Activated CD4-positive, alpha-beta T cell treated with anti-CD3 and anti-CD28 coated beads, Interleukin-2, amount 10 ng/mL, durations not matched to agents 24 days and 14 days (primary cell): ENCODE measurements at regions of chr1 and their contacts with region 1.

Region 1: DNA sequence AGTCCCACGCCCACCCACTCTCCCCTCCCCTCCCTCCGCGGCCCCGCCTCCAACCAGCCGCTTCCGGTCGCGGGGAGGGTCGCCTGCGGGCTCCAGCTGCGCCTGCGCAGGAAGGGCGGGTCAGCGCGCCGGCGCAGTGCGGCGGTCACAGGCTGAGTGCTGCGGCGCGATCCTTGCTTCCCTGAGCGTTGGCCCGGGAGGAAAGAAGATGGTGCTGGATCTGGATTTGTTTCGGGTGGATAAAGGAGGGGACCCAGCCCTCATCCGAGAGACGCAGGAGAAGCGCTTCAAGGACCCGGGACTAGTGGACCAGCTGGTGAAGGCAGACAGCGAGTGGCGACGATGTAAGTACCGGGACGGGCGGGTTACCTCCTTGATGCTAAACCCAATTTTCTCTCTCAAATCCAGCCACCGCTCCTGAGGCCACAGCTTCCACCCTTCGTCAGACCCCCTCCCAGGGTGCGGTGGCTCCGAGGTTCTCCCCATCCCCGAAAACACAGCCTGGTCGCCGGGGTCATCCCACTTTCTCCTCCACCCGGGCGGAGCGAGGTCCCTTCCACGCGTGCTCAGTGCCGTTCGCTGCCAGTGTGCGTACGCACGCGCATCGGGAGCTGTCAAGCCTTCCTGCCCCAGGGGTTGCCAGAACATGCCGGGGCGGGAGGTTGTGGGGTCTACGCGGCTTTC is at the start of gene SARS1:
- DNase-seq: peak; percentile 97
- H3K4me3 Mint-ChIP-seq: peak within 1 kb of the TSS; percentile 99
- H3K27ac Mint-ChIP-seq: peak within 1 kb of the TSS; percentile 96
- H3K4me1 Mint-ChIP-seq: peaks cover 25% of the 10 kb centered on the region
- H3K27me3 Mint-ChIP-seq: no peaks in the 10 kb centered on the region
- total RNA-seq, gene SARS1: 141 and 150 TPM in 2 replicates

Region 2: DNA sequence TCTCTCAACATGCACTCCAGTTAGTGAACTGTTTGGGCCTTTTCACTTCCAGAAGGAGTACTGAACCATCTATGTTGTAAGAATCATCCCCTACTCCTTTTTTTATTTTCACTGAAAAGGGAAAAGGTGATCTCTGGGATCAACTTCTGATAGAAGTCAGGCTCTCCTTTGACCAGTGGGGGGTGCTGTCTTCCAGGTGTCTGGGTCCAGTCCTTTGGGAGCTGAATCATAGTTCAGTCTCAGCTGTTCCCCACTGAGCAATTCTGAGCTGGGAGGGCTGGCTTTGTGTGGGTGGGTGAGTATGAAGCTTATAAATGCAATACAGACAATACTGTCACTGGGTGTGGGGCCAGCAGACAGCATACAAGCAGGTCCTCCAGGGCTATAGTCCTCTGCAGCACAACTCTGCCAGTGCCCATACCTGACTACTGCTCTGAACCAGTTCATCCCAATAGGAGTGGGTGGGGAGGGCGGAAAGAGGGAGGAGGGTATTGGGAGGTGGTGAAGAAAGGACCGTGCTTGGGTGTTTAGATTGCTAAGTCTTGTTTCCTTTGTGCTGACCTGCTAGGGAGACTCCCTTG is 12.7 kb before region 1 on chr1:
- intact Hi-C with region 1: loop called (anchors 1 kb)
- DNase-seq: peak; percentile 78
- H3K4me3 Mint-ChIP-seq: no peak overlapping the region
- H3K27ac Mint-ChIP-seq: no peak overlapping the region
- H3K4me1 Mint-ChIP-seq: peaks cover 23% of the 10 kb centered on the region
- H3K27me3 Mint-ChIP-seq: no peaks in the 10 kb centered on the region